Posterior cingulate gyrus (tissue), 11 donors: ENCODE measurements at regions of chr12 and their contacts with region 1.

Region 1: GRCh38 chr12:1093166-1093751 is 102.2 kb downstream of the ERC1 start:
- DNase-seq: no peak

Region 2: GRCh38 chr12:569803-570434 is 523.3 kb before region 1 on chr12:
- intact Hi-C with region 1: loop called (anchors 10 kb)
- DNase-seq: peak; percentile 71 to 97 (median 86)

Region 3: DNA sequence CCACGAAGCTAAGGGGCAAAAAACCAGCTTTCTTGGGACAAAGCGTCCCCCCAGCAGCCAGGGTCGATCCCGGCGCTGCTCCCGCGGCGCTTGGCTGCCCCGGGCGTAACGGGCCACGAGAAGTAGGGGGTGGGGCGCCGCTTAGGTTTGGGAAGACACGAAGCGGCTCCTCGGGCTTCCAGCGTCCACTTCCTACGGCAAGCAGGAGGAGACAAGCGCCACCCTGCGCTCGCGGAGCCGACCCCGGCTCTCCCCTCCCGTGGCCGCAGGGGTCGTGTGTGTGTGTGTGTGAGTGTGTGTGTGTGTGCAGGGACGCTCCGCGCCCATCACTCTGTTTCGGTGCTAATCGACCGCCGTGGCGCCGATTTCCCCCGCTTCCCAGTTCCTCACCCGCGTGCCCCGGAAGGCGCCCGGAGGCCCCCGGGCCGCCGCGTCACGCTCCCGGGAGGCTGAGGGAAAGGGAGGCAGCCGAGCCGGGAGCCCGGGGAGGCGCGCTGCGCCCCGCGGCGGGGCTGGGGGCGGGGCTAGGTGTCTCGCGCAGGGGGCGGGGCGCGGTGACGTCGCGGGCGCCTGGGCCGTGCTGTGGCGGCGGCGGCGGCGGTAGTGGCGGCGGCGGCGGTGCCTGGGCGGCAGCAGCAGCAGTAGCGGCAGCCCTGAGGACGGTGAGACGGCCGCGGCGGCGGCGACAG is 102.5 kb before region 1 on chr12 and contains the start of gene ERC1:
- intact Hi-C with region 1: loop called (anchors 5 kb)
- DNase-seq: peak; percentile 75 to 98 (median 86)